Posterior cingulate gyrus (tissue), 11 donors: ENCODE measurements at regions of chr12 and their contacts with region 1.

Region 1: DNA sequence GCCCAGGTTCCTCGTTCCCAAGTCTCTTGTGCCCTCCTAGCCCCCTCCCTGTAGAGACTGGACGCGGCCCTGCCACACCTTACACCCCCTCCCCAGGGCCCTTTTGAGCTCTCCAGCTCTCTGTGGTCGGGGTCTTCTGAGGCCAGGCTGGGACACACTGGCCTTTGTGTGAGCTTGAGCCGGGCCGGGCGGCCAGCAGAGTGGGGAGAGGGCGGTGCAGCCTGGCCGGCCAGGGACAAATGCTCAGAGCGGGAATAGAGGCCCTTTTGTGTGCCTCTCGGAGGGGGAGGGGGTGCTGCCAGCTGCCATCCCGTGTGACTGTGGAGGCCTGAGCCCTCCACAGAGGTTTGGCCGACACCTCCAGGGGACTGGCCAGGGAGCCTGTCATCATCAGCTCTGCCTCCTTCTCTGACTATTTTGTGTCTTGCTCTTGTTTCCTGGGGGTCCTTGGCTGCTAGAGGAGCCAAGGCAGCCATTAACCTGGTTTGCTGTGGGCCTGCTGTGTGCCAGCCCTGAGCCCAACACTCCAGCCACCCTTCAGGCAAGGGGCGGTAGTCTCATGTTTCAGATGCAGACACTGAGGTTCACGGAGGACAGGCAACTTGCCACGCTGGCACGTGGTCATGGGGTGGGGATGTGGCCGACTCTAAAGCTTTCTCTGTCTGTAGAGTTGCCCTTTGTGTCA is 13.6 kb downstream of the FAM222A start:
- DNase-seq: peak; percentile 81 to 98 (median 90)

Region 2: GRCh38 chr12:108468201-108468968 is 1258.8 kb before region 1 on chr12:
- intact Hi-C with region 1: no loop called
- DNase-seq: no peak

Region 3: DNA sequence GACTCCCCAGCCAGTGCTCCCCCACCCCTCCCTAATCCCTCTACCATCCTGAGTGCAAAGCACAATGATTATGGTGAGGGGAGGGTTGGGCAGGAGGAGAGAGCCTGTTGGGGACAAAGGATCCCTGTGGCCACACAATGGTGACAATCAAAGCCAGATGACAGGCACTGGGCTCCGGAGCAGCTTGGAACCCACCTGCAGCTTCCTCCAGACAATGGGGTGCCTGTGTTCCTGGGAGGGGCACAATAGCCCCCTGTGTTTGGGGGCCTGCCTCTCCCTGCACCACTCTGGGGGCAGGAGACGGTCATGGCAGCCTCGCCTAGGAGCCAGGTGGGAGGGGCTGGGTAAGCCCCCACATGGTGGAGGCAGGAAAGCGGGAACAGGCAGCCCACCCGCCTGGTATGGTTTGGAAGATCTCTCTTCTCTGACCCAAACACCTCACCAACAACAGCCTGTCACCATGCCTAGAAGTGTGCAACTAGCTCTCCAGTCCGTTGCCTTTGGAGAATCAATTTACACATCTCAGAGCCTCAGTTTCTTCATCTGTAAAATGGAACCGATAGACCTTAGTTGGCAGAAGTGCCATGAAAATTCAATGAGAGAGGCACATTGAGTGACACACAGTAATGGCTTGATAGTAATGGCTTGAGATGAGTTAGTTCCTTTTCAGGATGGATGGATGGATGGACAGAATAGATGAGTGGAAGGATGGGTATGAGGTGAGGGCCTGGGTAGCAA is 100.6 kb before region 1 on chr12:
- intact Hi-C with region 1: loop called (anchors 2 kb)
- DNase-seq: peak; percentile 69 to 98 (median 84)

Region 4: GRCh38 chr12:109880016-109880931 is 153.1 kb after region 1 on chr12 and contains the start of gene GLTP:
- intact Hi-C with region 1: no loop called
- DNase-seq: peak; percentile 59 to 98 (median 77)